Heart right ventricle (tissue), 16 donors: ENCODE measurements at regions of chr22 and their contacts with region 1.

Region 1: DNA sequence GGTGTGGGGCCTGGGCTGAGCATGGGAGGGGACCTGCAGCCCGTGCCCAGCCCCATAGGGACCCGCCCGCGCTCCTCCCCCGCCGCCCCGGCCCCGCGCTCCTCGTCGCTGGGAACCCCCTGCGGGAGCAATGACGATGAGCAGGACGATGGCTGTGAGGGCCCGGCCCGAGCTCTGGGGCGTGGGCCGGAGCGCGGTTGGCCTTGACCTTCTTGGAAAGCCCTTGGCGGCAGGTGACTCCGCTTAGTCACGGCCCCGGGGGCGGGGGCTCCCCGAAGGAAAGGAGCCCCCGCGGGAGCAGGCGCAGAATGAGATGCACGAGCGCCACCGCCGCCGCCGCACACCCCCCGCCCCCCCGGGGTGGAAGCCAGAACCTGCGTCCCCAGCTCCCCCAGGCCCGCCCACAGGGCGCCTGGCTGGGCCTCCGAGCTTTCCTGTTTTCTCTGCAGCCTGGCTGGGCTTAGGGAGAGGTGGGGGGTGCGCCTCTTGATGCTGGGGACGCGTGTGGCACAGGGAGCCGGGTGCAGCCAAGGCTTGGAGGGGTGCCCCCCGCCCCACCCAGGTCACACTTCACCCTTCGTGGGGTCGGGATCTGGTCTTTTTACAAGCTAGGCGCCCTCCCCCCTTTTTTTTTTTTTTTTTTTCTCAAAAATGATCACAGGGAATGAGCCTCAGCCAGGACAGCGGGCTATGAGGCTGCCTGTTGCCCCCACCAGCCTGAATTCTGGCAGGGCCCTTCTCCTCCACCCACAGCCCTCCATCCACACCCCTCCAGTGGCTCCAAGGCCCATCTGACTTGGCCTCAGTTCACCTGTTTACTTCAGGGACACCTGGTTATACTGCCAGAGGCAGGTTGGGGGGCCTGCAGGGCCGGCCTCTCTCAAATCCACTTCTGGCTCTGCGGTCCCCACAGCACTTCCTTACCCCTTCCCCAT is 17.9 kb downstream of the CRELD2 start:
- DNase-seq: peak; percentile 93 to 94
- ATAC-seq: peak; percentile 62 to 81 (median 72)
- H3K4me3 ChIP-seq: peak overlapping the region in 9 of 10 donors; percentile 32 to 72 (median 52)
- H3K27ac ChIP-seq: peak overlapping the region; percentile 90 to 100 (median 98)
- H3K4me1 ChIP-seq: peaks cover 36 to 72% (median 66%) of the 10 kb centered on the region in 9 donors
- H3K27me3 ChIP-seq: no peaks in the 10 kb centered on the region
- CTCF ChIP-seq: no peak

Region 2: GRCh38 chr22:49800408-49801238 is 135.7 kb before region 1 on chr22:
- intact Hi-C with region 1: no loop called
- DNase-seq: no peak
- ATAC-seq: peak; percentile 24 to 62 (median 52)
- H3K4me3 ChIP-seq: no peak overlapping the region
- H3K27ac ChIP-seq: peak overlapping the region in 5 of 10 donors; percentile 34 to 80 (median 56)
- H3K4me1 ChIP-seq: peaks cover 8 to 35% (median 28%) of the 10 kb centered on the region in 9 donors
- H3K27me3 ChIP-seq: no peaks in the 10 kb centered on the region
- CTCF ChIP-seq: peak in 3 of 9 donors; percentile 15 to 38 (median 33)

Region 3: DNA sequence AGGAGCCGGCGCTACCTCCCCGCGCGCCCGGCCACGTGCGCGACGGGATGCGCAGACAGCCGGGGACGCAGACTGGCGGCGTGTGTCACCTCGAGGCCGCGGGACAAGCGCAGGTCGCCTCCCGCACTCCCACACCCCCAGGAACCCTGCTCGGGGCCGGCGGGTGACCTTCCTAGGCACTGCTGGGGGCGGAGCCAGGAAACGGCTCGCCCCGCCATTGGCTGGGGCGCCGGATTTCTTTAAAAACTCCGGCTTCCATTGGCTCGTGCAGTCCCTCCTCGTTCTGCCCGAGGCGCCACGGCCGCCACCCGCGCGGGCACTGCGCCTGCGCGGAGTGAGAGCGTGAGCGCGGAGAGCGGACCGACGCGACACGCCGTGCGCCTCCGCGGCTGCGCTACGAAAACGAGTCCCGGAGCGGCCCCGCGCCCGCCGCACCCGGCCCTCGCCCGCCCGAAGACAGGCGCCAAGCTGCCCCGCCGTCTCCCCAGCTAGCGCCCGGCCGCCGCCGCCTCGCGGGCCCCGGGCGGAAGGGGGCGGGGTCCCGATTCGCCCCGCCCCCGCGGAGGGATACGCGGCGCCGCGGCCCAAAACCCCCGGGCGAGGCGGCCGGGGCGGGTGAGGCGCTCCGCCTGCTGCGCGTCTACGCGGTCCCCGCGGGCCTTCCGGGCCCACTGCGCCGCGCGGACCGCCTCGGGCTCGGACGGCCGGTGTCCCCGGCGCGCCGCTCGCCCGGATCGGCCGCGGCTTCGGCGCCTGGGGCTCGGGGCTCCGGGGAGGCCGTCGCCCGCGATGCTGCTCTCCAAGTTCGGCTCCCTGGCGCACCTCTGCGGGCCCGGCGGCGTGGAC is 24.1 kb after region 1 on chr22 and contains the start of gene PIM3:
- intact Hi-C with region 1: loop called in 7 of 10 experiments (anchors 1 to 5 kb)
- DNase-seq: peak; percentile 94 to 95
- ATAC-seq: peak; percentile 79 to 94 (median 88)
- H3K4me3 ChIP-seq: peak within 1 kb of the TSS; percentile 82 to 97 (median 89)
- H3K27ac ChIP-seq: peak within 1 kb of the TSS; percentile 86 to 100 (median 98)
- H3K4me1 ChIP-seq: peaks cover 33 to 61% (median 51%) of the 10 kb centered on the region in 9 donors
- H3K27me3 ChIP-seq: no peaks in the 10 kb centered on the region
- CTCF ChIP-seq: no peak
- total RNA-seq, gene PIM3: 27.4 to 81.6 (median 41.6) TPM

Region 4: DNA sequence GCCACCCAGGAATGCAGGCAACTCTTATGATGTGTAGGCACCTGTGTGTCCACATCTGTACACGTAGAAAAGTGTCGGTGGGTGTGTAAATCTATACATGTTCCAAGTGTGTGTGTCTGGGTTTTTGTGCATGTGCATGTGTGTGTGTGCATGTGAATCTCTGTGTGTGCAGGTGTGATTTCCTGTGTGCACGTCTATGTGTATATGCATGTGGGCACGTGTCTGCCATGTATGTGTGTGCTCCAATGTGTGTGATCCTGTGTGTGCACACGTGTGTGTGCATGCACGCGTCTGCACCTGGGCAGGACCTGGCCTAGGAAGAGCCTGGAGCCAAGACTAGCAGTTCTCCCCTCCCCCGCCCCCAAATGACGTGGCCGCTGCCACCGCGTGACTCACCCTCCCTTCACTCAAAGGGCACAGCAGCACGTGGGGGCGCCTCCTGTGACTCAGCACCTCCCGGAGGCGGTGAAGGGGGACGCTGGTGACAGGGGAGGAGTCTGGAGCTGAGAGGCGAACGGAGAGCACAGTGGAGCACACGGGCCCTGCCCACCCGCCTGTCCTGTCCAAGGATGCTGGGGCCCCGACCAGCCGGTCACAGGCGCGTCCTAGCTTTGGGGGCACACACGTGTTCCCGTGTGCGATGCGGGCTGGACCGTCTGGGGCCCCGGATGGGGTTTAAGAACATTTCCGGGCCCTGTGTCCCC is 34.4 kb after region 1 on chr22:
- intact Hi-C with region 1: loop called in 5 of 10 experiments (anchors 2 to 5 kb)
- DNase-seq: peak; percentile 92 to 94
- ATAC-seq: peak; percentile 85 to 92 (median 90)
- H3K4me3 ChIP-seq: peak overlapping the region; percentile 35 to 60 (median 54)
- H3K27ac ChIP-seq: peak overlapping the region; percentile 8 to 99 (median 86)
- H3K4me1 ChIP-seq: peaks cover 18 to 60% (median 45%) of the 10 kb centered on the region in 9 donors
- H3K27me3 ChIP-seq: peaks cover 0 to 10% (median 0%) of the 10 kb centered on the region in 7 donors
- CTCF ChIP-seq: no peak

Region 5: DNA sequence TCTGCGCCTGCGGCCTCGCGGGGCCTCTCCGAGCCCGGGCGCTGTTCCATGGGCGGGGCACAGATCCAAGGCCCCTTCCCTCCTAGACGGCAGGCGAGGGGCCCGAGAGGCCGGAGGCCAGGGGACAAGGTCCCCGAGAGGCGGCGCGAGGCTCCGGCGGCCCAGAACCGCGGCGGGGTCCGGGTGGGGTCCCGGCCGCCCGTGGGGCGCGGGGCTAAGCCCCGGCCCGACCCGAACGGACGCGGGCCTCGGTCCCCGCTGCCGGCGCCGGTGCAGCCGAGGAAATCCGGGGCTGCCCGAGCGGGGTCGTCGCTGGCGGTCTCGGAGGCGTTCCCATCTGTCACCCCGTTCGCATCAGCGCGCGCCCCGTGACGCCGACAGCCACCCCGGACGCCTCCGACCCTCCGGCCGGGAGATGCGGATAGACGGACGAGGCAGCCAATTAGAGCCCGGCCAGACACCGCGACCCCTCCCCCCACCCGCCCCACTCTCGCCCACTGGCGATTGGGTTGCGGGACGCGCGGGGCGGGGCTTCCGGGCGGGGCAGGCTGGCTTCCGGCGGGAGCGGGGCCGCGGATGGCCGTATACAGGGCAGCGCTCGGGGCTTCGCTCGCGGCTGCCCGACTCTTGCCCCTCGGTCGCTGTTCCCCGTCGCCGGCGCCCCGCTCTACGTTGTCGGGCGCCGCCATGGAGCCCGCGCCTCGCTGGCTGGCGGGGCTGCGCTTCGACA is 264.3 kb after region 1 on chr22 and contains the start of gene SELENOO:
- intact Hi-C with region 1: loop called in 2 of 10 experiments (anchors 10 kb)
- DNase-seq: peak; percentile 94 to 95
- ATAC-seq: peak; percentile 81 to 96 (median 93)
- H3K4me3 ChIP-seq: peak within 1 kb of the TSS; percentile 63 to 98 (median 76)
- H3K27ac ChIP-seq: peak within 1 kb of the TSS; percentile 68 to 91 (median 86)
- H3K4me1 ChIP-seq: peaks cover 4 to 41% (median 28%) of the 10 kb centered on the region in 9 donors
- H3K27me3 ChIP-seq: no peaks in the 10 kb centered on the region
- CTCF ChIP-seq: peak in 1 of 9 donors; percentile 3
- total RNA-seq, gene SELENOO: 9.6 to 24.6 (median 11.9) TPM

Region 6: GRCh38 chr22:50326959-50327710 is 390.9 kb after region 1 on chr22 and contains the start of gene DENND6B:
- intact Hi-C with region 1: no loop called
- DNase-seq: peak; percentile 73 to 85
- ATAC-seq: peak; percentile 92 to 99 (median 95)
- H3K4me3 ChIP-seq: peak within 1 kb of the TSS; percentile 44 to 98 (median 80)
- H3K27ac ChIP-seq: peak within 1 kb of the TSS; percentile 89 to 100 (median 96)
- H3K4me1 ChIP-seq: peaks cover 0 to 20% (median 14%) of the 10 kb centered on the region in 9 donors
- H3K27me3 ChIP-seq: no peaks in the 10 kb centered on the region
- CTCF ChIP-seq: peak; percentile 33 to 87 (median 59)
- total RNA-seq, gene DENND6B: 1.1 to 3.6 (median 2.0) TPM